B cell (primary cell): ENCODE measurements at regions of chr11 and their contacts with region 1.

Region 1: DNA sequence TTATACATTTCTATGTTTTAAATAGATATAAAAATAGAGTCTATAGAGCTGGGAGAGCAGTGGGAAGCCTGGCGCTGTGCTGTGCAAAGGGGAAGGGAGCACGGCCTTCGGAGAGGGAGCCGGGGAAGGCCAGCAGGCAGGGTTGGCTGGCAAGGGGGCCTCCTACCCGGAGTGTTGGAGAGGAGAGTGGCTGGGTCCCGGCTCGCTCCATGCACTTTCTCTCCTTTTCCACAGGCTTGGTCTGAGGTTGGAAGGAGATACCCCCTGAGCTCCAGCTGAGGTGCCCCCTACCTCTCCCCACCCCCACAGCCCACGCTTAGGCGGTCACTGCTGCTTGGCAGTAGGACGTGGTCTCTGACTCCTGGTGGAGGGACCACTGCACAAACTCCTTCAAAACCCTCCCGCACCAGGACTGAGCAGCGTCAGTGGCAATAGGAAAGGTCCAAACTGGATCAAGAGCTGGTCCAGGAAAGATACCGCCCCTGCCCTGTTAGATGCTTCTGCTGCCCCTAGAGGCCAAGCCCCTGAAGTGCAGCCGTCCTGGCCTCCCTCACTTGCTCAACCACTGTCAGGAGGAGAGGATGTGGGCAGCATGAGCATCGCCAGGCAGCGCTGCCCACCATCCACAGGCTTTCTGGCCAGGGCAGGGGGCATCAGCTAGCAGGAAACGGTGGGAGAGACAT is 52.9 kb downstream of the SYT13 start:
- DNase-seq: peak; percentile 57
- ATAC-seq: peak; percentile 64
- H3K4me3 ChIP-seq: no peak overlapping the region
- H3K4me3 Mint-ChIP-seq: no peak overlapping the region
- H3K27ac ChIP-seq: no peak overlapping the region
- H3K27ac Mint-ChIP-seq: no peak overlapping the region
- H3K4me1 ChIP-seq: no peaks in the 10 kb centered on the region
- H3K4me1 Mint-ChIP-seq: no peaks in the 10 kb centered on the region
- H3K27me3 ChIP-seq: peaks cover 0 to 6% (median 1%) of the 10 kb centered on the region in 4 experiments
- H3K27me3 Mint-ChIP-seq: peaks cover 13% of the 10 kb centered on the region
- CTCF ChIP-seq: peak; percentile 76

Region 2: GRCh38 chr11:45204761-45205160 is 28.5 kb before region 1 on chr11:
- CTCF ChIA-PET with region 1: no interaction called
- POLR2A ChIA-PET with region 1: no interaction called
- intact Hi-C with region 1: no loop called
- DNase-seq: no peak
- ATAC-seq: no peak
- H3K4me3 ChIP-seq: no peak overlapping the region
- H3K4me3 Mint-ChIP-seq: no peak overlapping the region
- H3K27ac ChIP-seq: no peak overlapping the region
- H3K27ac Mint-ChIP-seq: no peak overlapping the region
- H3K4me1 ChIP-seq: peaks cover 6 to 7% of the 10 kb centered on the region in 2 donors
- H3K4me1 Mint-ChIP-seq: peaks cover 6% of the 10 kb centered on the region
- H3K27me3 ChIP-seq: no peaks in the 10 kb centered on the region
- H3K27me3 Mint-ChIP-seq: no peaks in the 10 kb centered on the region
- CTCF ChIP-seq: no peak

Region 3: GRCh38 chr11:45245218-45246045 is 12.2 kb after region 1 on chr11:
- CTCF ChIA-PET with region 1: interaction called, 14 read pairs
- POLR2A ChIA-PET with region 1: no interaction called
- intact Hi-C with region 1: no loop called
- DNase-seq: no peak
- ATAC-seq: no peak
- H3K4me3 ChIP-seq: no peak overlapping the region
- H3K4me3 Mint-ChIP-seq: no peak overlapping the region
- H3K27ac ChIP-seq: no peak overlapping the region
- H3K27ac Mint-ChIP-seq: no peak overlapping the region
- H3K4me1 ChIP-seq: no peaks in the 10 kb centered on the region
- H3K4me1 Mint-ChIP-seq: no peaks in the 10 kb centered on the region
- H3K27me3 ChIP-seq: no peaks in the 10 kb centered on the region
- H3K27me3 Mint-ChIP-seq: peaks cover 25% of the 10 kb centered on the region
- CTCF ChIP-seq: no peak